ENCODE measurements at regions of chr19 and their contacts with region 1.

Region 1: DNA sequence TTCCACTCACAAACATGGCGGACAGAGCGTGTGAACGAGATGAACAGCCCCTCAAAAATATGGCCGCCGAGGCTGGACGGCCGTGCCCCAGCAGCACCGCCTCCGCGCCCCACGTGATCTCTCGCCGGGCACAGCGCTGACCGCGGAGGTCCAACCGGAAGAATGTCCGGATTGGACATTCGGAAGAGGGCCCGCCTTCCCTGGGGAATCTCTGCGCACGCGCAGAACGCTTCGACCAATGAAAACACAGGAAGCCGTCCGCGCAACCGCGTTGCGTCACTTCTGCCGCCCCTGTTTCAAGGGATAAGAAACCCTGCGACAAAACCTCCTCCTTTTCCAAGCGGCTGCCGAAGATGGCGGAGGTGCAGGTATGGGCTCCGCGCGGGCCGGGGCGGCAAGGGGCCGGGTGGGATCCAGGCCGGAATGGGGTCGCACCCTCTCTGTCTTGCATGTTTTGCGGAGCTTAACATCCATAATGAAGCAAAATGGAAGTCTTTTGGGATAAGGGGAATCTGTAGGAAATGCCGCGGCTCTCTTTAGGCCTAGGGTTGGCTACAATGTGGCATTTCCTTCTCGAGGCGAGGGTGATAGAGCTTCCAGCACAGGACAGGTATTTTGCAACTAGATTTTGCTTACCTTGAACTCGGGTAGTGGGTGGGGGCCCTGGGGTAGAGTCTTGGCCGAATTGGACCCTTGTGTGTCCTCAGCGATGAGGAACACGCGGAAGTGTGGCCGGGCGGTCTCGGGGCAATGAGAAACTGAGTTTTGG is at the start of gene RPL13A:
- DNase-seq: peak; percentile 100
- total RNA-seq, gene RPL13A: 1,030 TPM

Region 2: GRCh38 chr19:49327878-49328544 is 159.4 kb before region 1 on chr19:
- intact Hi-C with region 1: no loop called
- DNase-seq: no peak

Region 3: GRCh38 chr19:49391581-49392399 is 95.7 kb before region 1 on chr19:
- intact Hi-C with region 1: no loop called
- DNase-seq: peak; percentile 84

Region 4: GRCh38 chr19:49421039-49421877 is 66.2 kb before region 1 on chr19:
- intact Hi-C with region 1: no loop called
- DNase-seq: no peak

Region 5: GRCh38 chr19:49451430-49452181 is 35.9 kb before region 1 on chr19 and contains the start of gene PIH1D1:
- intact Hi-C with region 1: loop called (anchors 5 kb)
- DNase-seq: peak; percentile 95
- total RNA-seq, gene PIH1D1: 24.2 TPM

Measured in cardiac septum (tissue), 1 donor.